A549 (cell line): ENCODE measurements at regions of chr15 and their contacts with region 1.

Region 1: GRCh38 chr15:51776952-51777574 is 25.7 kb downstream of the TMOD2 start:
- DNase-seq: peak; percentile 88
- ATAC-seq: peak; percentile 93 to 97
- H3K4me3 ChIP-seq: no peak overlapping the region
- H3K27ac ChIP-seq: no peak overlapping the region
- H3K4me1 ChIP-seq: peaks cover 13% of the 10 kb centered on the region; the same call in 2 of the 3 replicates
- CTCF ChIP-seq: peak; percentile 92
- EP300 ChIP-seq: no peak
- POLR2A ChIP-seq: no peak
- RAD21 ChIP-seq: peak; percentile 70 to 78

Region 2: GRCh38 chr15:51634591-51635198 is 142.4 kb before region 1 on chr15:
- CTCF ChIA-PET with region 1: interaction called, 597 read pairs
- POLR2A ChIA-PET with region 1: no interaction called
- DNase-seq: no peak
- ATAC-seq: no peak
- H3K4me3 ChIP-seq: no peak overlapping the region
- H3K27ac ChIP-seq: no peak overlapping the region
- H3K4me1 ChIP-seq: no peaks in the 10 kb centered on the region
- CTCF ChIP-seq: no peak
- EP300 ChIP-seq: no peak
- POLR2A ChIP-seq: no peak
- RAD21 ChIP-seq: no peak

Region 3: DNA sequence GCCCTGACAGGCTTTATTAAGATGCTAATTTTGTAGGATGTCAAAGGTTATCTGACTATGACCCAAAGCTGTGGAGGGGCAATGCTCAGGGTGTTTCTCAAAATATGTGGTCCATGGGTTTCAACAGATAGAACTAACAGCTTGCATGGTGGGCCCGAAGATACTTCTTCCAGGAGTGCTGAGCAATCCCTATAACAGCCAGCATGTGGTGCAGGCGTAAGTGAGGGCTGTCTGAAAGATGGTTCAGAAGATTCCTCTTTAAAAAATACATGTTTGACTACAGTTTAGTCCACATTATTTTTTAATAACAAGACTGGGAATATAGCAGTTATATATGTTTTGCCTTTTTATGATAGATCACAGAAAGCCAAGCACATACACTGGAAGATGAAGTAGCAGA is 88.2 kb before region 1 on chr15:
- CTCF ChIA-PET with region 1: interaction called, 26 read pairs
- POLR2A ChIA-PET with region 1: no interaction called
- DNase-seq: peak in 1 of 2 experiments; percentile 28
- ATAC-seq: peak; percentile 63 to 79; a peak in 4 of 6 replicates
- H3K4me3 ChIP-seq: no peak overlapping the region
- H3K27ac ChIP-seq: no peak overlapping the region
- H3K4me1 ChIP-seq: no peaks in the 10 kb centered on the region
- CTCF ChIP-seq: no peak
- EP300 ChIP-seq: no peak
- POLR2A ChIP-seq: no peak
- RAD21 ChIP-seq: 0 out of 5 replicates have a peak, but pooled peaks of 1 of the 2 experiments have one; percentile 7

Region 4: GRCh38 chr15:51750792-51751685 is 26.0 kb before region 1 on chr15 and contains the start of gene TMOD2:
- CTCF ChIA-PET with region 1: interaction called, 193 read pairs
- POLR2A ChIA-PET with region 1: interaction called, 3 read pairs
- DNase-seq: peak; percentile 34 to 51
- ATAC-seq: peak; percentile 88 to 91
- H3K4me3 ChIP-seq: peak within 1 kb of the TSS; percentile 94
- H3K27ac ChIP-seq: peak within 1 kb of the TSS; percentile 65 to 83; a peak in 5 of 6 replicates
- H3K4me1 ChIP-seq: peaks cover 3% of the 10 kb centered on the region; the same call in 1 of the 3 replicates
- CTCF ChIP-seq: no peak
- EP300 ChIP-seq: no peak
- POLR2A ChIP-seq: 0 out of 2 replicates have a peak, but pooled peaks have one; percentile 7
- RAD21 ChIP-seq: no peak
- polyA plus RNA-seq, gene TMOD2: 2.5 and 2.8 TPM in 2 replicates

Region 5: DNA sequence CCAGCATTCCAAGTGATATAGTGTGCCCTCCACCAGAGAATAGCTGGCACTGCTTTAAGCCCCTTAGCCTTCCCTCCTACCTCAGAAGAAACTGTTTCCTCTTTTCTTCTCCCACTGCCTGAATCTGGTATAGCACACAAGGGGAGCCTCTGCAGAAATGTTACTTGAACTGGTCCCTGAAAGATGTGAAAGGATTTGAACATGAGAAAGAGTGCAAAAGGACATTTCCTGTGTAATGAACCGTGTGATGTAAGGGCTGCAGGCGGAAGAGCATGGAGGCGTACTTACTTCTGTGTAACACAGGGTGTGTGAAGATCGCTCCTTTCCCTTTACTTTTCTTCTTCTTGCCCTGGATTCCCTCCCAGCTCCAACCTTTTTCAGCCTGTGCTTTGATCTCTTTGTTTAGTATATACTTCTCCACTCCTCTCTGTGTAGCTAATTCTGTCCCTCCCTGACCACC is 60.8 kb after region 1 on chr15:
- CTCF ChIA-PET with region 1: interaction called, 10 read pairs
- POLR2A ChIA-PET with region 1: no interaction called
- DNase-seq: peak in 1 of 2 experiments; percentile 64
- ATAC-seq: peak; percentile 69 to 76
- H3K4me3 ChIP-seq: no peak overlapping the region
- H3K27ac ChIP-seq: peak overlapping the region; percentile 50 to 77
- H3K4me1 ChIP-seq: peaks cover 92% of the 10 kb centered on the region
- CTCF ChIP-seq: no peak
- EP300 ChIP-seq: no peak
- POLR2A ChIP-seq: no peak
- RAD21 ChIP-seq: no peak

Region 6: GRCh38 chr15:51917493-51917892 is 140.4 kb after region 1 on chr15:
- CTCF ChIA-PET with region 1: interaction called, 18 read pairs
- POLR2A ChIA-PET with region 1: no interaction called
- DNase-seq: peak; percentile 44 to 89
- ATAC-seq: peak; percentile 95 to 99
- H3K4me3 ChIP-seq: no peak overlapping the region
- H3K27ac ChIP-seq: no peak overlapping the region
- H3K4me1 ChIP-seq: peaks cover 4% of the 10 kb centered on the region; the same call in 1 of the 3 replicates
- CTCF ChIP-seq: peak; percentile 76
- EP300 ChIP-seq: no peak
- POLR2A ChIP-seq: no peak
- RAD21 ChIP-seq: peak; percentile 77 to 88